ENCODE measurements at regions of chr10 and their contacts with region 1.

Region 1: GRCh38 chr10:119686439-119687191 is 35.4 kb downstream of the BAG3 start:
- DNase-seq: peak; percentile 89
- ATAC-seq: peak; percentile 85

Region 2: DNA sequence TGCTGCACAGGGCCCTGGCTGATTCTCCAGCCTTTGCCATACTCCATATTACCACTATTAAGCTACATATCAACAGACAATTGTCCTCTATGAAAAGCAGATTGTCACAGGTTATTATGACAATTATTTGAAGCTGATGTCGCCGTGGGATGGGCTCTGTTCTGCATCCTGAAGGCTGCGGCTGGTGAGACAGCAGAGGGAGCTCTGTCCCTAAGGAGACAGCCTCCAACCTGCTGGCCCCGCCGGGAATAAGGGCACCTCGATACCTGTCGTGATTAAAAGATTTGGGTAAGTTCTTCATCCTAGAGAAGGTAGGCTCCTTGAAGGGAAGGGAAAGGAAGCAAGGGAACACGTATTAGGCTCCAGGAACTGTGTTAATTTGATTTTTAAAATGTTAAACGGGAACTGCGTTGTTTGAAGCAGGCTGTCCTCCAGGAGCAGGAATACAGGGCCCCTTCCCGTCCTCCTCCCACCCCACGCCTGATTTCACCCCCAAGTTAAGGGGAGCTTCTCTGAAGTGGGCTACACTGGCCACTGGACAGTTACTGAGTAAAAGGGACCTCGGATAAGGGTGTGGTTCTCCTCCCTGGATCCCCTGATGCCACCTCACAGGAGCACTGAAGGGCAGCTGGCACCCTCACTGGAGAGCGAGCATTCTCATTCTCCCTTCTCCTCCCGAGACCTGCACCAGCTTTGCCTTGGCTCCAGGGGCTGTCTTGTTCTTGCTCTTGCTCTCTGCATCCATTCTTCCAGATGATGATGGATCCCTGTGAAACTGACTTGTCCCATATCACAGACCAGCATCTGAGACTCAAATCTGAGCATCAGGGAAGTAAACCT is 78.1 kb before region 1 on chr10:
- intact Hi-C with region 1: loop called (anchors 5 kb)
- DNase-seq: peak; percentile 70
- ATAC-seq: peak; percentile 65

Region 3: DNA sequence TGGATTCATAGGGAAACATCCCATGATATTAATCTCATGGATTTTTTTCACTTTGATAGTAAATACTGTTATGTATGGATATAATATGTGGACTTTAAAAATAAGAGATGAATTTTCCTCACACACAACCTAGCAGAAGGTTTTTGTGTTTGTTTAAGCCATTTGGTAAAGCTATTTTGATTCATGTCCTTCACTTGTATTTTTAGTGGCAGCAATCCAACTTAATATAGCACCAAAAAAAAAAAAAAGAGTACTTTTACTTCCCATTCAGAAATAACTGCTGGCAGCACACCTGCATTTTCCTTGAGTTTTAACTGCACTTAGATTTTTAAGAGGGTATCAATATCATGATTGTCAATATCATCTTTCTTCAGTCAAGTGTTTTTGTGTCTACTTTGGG is 126.1 kb after region 1 on chr10:
- intact Hi-C with region 1: no loop called
- DNase-seq: no peak
- ATAC-seq: no peak

Measured in Right ventricle myocardium inferior (tissue), 1 donor.